Head of caudate nucleus (tissue), 42 donors: ENCODE measurements at regions of chrX and their contacts with region 1.

Region 1: DNA sequence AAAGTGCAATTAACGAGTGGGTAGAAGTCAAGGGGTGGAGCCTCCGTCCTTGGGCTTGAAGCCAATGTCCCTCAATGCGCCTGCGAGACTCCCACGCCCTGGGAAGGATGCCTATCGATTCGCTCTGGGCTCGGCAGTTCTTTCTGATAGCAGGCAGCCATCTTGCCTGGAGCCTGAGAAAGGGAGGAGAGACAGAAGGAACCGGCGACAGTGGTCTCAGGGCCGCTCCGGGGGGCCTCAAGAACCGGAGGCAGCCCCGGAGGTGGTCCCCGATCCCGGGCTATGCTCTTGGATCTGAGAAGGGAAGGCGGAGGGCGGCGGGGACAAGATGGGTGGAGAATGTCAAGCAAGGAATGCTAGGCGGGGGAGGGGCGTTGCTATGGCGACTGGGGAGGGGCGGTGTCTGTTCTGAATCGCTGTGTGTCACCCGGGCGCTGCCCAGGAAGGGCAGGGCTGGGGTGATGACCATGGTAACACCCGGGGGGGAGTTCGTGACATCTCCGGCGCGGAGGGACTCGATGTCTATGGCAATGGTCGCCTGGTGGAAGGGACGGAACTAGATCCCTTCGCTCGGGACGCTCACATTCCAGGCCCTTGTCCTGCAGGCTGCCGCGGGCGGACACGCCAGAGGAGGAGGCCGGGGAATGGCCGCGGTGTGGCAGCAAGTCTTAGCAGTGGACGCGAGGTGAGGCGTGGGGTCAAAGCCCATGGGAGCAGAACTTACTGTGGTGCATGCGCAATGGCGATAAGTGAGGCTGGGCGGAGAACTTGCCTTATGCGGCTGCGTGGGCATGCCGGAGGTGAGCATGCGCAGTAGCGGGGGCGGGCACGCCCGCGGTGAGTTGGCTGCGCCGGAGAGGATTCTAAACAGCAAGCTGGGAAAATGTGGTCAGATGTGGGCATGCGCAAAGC is at the start of gene WDR13:
- DNase-seq: peak; percentile 80 to 95 (median 88)

Region 2: GRCh38 chrX:48475774-48476577 is 121.6 kb before region 1 on chrX and contains the start of gene FTSJ1:
- intact Hi-C with region 1: loop called (anchors 10 kb)
- DNase-seq: peak; percentile 85 to 96 (median 92)

Region 3: DNA sequence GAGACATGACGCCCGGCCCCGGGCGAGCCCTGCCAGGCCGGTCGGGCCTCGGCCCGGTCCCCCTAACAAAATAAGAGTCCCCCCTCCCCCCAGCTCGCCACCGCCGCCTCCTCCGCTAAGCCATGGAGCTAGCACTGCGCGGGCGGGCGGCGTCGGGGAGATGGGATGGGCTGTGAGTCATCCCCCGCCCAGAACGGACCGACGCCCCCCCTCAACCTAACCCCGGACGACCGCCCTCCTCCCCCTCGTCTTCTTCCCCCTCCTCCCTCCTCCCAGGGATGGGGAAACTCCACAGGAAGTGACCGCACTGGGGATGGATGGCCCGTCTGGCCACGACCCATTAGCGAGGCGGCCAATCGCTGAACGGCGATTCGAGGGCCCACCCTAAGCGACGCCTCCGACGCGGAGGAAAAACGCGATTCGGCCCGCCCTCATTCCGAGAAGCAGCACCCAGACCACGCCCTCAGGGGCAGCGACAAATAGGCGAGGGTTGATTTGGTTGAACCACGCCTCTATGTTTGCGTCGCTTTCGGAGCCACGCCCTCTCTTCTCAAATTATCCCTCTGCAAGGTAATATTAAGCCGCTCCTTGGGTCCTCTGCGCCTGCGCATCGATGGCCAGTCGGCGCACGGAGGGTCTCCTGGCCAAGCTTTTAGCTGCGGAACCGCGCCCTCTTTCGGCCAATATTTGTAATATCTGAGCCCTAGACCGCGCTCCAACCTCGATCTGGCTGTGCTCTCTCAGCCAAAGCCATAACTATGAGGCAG is 445.8 kb after region 1 on chrX and contains the start of gene TFE3:
- intact Hi-C with region 1: no loop called
- DNase-seq: peak; percentile 88 to 98 (median 96)